ENCODE measurements at regions of chr1 and their contacts with region 1.

Region 1: DNA sequence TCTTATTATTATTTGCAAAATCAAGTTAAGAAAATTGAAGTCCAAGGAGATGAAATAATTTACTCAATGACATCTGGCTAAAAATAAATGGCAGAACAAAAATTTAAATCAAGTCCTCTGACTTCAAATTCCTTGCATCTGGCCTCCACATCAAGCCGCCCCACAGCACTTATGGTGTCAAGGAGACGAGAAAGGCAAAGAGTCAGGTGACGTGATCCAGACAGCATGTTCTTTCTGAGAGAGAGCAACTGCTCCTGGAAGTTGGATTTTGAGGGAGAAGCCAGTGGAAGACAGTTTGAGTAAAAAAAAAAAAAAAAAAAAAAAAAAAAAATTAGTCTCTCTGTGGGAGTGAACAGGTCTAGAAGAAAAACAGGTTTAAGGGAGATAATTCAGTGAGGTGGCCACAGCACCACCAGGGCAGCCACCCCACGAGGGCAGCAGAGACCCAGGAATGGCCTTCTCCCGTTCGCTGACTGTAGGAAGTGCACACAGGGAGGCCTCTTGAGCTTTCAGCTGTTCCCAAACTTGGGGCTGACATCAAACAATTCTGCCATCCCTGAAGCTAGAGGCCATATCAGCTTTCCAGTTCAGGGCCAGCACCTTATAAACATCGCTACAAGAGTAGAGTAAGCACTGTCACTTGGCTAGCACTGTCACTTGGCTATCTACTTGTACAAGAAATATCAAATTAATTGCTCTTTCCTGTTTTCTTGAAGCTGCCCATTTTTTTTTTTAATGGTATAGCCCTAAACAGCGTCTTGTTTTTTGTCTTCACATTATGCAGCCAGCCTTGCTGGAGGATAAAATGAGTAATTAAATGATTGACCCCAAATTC is 7.8 kb downstream of the C1orf162 start:
- DNase-seq: peak; percentile 81 to 92 (median 85)
- H3K4me3 ChIP-seq: no peak overlapping the region
- H3K27ac ChIP-seq: peak overlapping the region in 2 of 5 donors; percentile 3 to 7
- H3K4me1 ChIP-seq: peaks cover 0 to 5% of the 10 kb centered on the region in 2 donors
- H3K27me3 ChIP-seq: no peaks in the 10 kb centered on the region
- CTCF ChIP-seq: peak; percentile 42 to 91 (median 82)
- POLR2A ChIP-seq: no peak

Region 2: DNA sequence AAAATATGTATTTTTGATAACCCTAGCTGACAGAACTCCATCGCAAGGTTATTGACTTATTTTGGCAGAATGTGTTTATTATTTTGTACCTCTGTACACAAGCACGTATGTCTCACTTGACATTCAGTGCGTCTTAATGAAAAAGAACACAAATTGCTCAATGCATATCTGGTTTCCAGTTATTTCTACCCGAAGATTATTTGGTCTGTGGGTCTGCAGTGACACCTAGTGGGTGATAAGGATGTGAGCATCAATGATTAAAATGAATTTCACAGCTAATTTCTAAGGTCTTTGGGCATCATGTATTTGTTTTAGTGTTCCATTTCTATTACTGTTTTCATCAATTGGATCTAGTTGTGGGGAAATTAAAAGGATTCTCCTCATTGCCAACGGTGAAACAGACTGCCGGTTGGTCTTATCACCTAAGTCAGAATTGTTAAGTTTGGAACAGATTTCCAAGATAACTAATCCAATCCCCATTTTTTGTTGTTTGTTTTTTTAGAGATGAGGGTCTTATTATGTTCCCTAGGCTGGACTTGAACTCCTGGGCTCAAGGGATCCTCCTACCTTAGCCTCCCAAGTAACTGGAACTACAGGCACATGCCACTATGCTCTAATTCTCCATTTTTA is 288.0 kb after region 1 on chr1:
- intact Hi-C with region 1: loop called in 1 of 2 experiments (anchors 5 kb)
- DNase-seq: peak in 6 of 7 donors; percentile 32 to 65 (median 55)
- H3K4me3 ChIP-seq: no peak overlapping the region
- H3K27ac ChIP-seq: no peak overlapping the region
- H3K4me1 ChIP-seq: no peaks in the 10 kb centered on the region
- H3K27me3 ChIP-seq: no peaks in the 10 kb centered on the region
- CTCF ChIP-seq: peak; percentile 84 to 95 (median 90)
- POLR2A ChIP-seq: no peak

Measured in adrenal gland (tissue), 19 donors.